AG04450 (cell line): ENCODE measurements at regions of chrX and their contacts with region 1.

Region 1: GRCh38 chrX:41116948-41117347 is 31.7 kb downstream of the USP9X start:
- DNase-seq: no peak
- H3K4me3 ChIP-seq: no peak overlapping the region
- H3K27ac ChIP-seq: no peak overlapping the region
- H3K27me3 ChIP-seq: no peaks in the 10 kb centered on the region
- CTCF ChIP-seq: no peak

Region 2: DNA sequence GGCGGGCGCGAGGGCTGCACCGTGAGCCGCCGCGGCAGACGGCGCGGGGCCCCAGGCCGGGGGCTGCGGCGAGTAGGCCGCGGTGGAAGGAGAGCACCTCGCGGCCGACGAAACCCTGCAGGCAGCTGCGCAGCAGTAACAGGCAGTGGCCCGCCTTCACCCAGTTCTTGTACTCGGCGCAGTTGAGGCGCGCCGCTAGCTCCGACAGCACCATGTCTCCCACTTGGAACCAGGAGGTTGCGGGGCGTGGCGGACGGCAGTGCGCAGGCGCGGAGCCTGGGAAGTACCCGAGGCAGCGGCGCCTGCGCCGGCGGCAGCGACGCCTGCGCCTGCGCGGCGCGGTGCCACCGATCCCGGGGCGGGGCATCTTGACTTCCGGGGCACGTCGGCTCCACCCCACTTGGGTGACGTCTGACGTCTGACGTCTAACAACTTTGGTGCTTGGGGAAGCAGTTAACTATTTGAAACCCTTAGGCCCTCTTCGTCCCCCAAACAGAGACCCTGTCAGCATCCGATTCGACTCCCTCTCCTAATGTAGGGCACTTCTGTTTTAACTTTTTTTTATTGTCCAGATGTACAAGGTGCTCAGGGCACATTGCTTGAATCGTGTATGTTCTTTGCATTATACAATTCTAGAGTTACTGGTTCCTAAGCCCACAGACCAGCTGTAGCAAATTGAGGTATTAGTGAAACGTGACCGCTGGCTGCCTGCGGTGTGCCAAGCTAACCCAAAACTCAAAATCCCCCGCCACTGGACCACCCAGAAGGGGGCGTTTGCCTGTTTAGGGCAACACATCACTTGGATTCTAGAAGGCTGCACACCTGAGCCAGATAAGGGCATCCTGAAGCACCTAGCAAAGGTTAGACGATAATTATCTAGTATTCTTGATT is 469.4 kb before region 1 on chrX and contains the start of gene CXorf38:
- CTCF ChIA-PET with region 1: interaction called, 24 read pairs
- POLR2A ChIA-PET with region 1: no interaction called
- DNase-seq: peak; percentile 54
- H3K4me3 ChIP-seq: peak within 1 kb of the TSS; percentile 69
- H3K27ac ChIP-seq: peak within 1 kb of the TSS; percentile 77
- H3K27me3 ChIP-seq: no peaks in the 10 kb centered on the region
- CTCF ChIP-seq: no peak
- polyA plus RNA-seq, gene CXorf38: 7.7 and 10.1 TPM in 2 replicates

Region 3: GRCh38 chrX:40877887-40878286 is 239.1 kb before region 1 on chrX:
- CTCF ChIA-PET with region 1: interaction called, 37 read pairs
- POLR2A ChIA-PET with region 1: no interaction called
- DNase-seq: no peak
- H3K4me3 ChIP-seq: no peak overlapping the region
- H3K27ac ChIP-seq: no peak overlapping the region
- H3K27me3 ChIP-seq: no peaks in the 10 kb centered on the region
- CTCF ChIP-seq: peak; percentile 56

Region 4: DNA sequence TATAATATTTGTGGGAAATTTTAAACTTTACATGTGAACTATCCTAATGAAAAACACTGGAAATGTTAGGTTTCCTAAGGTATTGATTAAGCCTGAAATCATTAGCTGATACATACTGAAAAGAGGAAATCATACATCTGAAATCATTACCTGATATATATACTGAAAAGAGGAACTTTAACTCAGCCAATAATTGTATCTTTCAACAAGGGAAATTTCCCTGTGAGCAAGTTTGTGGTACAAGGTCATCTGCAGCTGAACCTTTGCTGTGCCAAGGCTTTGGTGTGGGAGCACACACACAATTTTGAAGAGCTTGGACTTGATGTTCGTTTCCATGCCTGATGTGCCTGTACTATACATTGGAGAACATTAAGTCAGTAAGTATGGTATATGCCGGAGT is 163.6 kb before region 1 on chrX:
- CTCF ChIA-PET with region 1: no interaction called
- POLR2A ChIA-PET with region 1: no interaction called
- DNase-seq: no peak
- H3K4me3 ChIP-seq: no peak overlapping the region
- H3K27ac ChIP-seq: no peak overlapping the region
- H3K27me3 ChIP-seq: no peaks in the 10 kb centered on the region
- CTCF ChIP-seq: no peak

Region 5: DNA sequence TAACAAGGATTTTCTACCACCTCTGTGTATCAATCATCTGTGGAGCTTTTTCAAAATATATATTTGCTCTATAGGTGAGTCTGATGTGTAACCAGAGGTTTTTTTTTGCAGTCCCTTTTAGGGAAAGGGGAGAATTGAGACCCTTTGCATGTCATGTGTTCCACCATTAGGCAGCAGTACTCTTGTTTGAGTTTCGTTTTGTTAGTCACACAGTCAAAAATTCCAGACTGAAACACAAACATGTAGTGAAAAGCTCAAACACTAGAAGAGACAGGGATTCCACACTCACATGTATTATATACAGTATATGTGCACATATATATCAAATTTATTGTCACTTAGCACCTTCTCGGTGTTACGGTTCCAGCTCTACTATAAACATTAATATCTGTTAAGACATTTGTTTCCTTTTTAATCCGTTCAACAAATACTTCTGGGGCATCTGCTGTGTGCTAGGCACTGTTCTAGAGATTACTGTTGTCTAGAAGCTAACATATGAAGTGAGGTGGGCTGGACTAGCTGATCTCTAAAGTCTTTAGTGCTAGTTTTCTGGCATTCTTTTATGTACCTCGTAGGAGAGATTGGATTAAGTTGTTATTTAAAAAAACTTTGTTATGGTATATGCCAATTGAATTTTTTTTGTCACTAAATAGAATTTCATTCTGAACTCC is 26.2 kb before region 1 on chrX:
- CTCF ChIA-PET with region 1: interaction called, 18 read pairs
- POLR2A ChIA-PET with region 1: interaction called, 10 read pairs
- DNase-seq: no peak
- H3K4me3 ChIP-seq: no peak overlapping the region
- H3K27ac ChIP-seq: no peak overlapping the region
- H3K27me3 ChIP-seq: no peaks in the 10 kb centered on the region
- CTCF ChIP-seq: no peak

Region 6: GRCh38 chrX:41105005-41105404 is 11.9 kb before region 1 on chrX:
- CTCF ChIA-PET with region 1: interaction called, 16 read pairs
- POLR2A ChIA-PET with region 1: no interaction called
- DNase-seq: no peak
- H3K4me3 ChIP-seq: no peak overlapping the region
- H3K27ac ChIP-seq: no peak overlapping the region
- H3K27me3 ChIP-seq: no peaks in the 10 kb centered on the region
- CTCF ChIP-seq: no peak

Region 7: DNA sequence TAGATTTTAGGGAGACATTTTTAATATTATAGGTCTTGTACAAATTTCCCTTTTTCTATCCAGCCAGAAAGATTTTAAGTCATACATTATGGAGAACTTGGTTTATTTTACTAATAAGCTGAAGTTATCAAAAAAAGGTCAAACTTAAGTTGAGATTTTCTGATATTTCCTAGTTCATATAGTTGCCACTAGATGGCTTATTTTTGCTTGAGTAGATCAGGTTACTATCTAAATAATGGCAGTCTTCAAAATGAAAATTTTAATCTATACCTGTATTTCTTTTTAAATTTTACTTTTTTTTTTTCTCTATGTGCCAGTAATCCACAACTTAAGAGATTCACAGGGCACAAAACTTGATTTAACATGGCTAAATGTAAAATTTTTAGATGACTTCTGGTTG is 20.6 kb after region 1 on chrX:
- CTCF ChIA-PET with region 1: interaction called, 11 read pairs
- POLR2A ChIA-PET with region 1: no interaction called
- DNase-seq: no peak
- H3K4me3 ChIP-seq: no peak overlapping the region
- H3K27ac ChIP-seq: no peak overlapping the region
- H3K27me3 ChIP-seq: no peaks in the 10 kb centered on the region
- CTCF ChIP-seq: peak; percentile 39